ENCODE measurements at regions of chr16 and their contacts with region 1.

Region 1: DNA sequence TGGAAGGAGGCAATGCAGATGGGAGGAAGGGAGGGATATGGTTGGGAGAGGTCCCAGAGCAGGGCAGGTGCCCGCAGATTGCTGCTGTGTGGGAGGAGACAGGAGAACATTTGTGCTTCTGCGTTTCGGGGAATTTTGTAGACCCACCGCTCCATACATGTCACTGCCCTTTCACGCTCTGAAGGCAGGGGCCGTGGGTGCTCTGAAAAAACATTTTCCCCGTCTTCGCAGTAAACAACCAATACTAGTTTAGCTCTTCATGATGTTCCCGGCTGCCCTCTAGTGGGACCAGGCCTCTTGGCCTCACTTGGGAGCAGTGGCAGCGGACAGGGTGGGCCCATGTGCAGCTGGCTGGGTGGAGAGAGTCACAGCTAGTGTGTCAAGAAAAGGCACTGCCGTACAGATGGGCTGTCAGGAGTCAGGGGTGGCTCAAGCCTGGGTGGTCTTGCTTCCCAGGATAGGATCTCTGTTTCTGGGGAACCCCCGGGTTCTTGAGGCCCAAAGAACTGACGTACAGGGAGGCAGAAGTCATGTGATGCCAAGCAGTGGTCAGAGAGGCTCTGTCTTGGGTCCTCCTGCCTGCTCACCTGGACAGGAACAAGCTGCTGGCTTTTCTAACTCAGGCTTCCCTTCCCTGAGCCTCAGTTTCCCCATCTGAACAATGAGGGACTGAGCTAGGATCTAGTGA is 46.5 kb upstream of the CPNE2 start:
- DNase-seq: peak; percentile 40 to 66
- ATAC-seq: peak in 2 of 3 donors; percentile 6 to 27
- H3K4me3 ChIP-seq: no peak overlapping the region
- H3K4me3 Mint-ChIP-seq: peak overlapping the region; percentile 53
- H3K27ac ChIP-seq: peak overlapping the region; percentile 37
- H3K27ac Mint-ChIP-seq: peak overlapping the region; percentile 81 to 87
- H3K4me1 ChIP-seq: peaks cover 57% of the 10 kb centered on the region
- H3K4me1 Mint-ChIP-seq: peaks cover 35 to 37% of the 10 kb centered on the region in 2 donors
- H3K27me3 ChIP-seq: no peaks in the 10 kb centered on the region
- H3K27me3 Mint-ChIP-seq: no peaks in the 10 kb centered on the region
- CTCF ChIP-seq: peak; percentile 44

Region 2: GRCh38 chr16:56860226-56861020 is 185.4 kb before region 1 on chr16:
- intact Hi-C with region 1: loop called (anchors 5 kb)
- DNase-seq: peak in 1 of 2 donors; percentile 72
- ATAC-seq: peak; percentile 72 to 75 (median 74)
- H3K4me3 ChIP-seq: no peak overlapping the region
- H3K4me3 Mint-ChIP-seq: peak overlapping the region; percentile 80
- H3K27ac ChIP-seq: peak overlapping the region; percentile 64
- H3K27ac Mint-ChIP-seq: peak overlapping the region; percentile 80 to 90
- H3K4me1 ChIP-seq: peaks cover 69% of the 10 kb centered on the region
- H3K4me1 Mint-ChIP-seq: peaks cover 51 to 53% of the 10 kb centered on the region in 2 donors
- H3K27me3 ChIP-seq: no peaks in the 10 kb centered on the region
- H3K27me3 Mint-ChIP-seq: peaks cover 0 to 2% of the 10 kb centered on the region in 2 donors
- CTCF ChIP-seq: no peak

Region 3: DNA sequence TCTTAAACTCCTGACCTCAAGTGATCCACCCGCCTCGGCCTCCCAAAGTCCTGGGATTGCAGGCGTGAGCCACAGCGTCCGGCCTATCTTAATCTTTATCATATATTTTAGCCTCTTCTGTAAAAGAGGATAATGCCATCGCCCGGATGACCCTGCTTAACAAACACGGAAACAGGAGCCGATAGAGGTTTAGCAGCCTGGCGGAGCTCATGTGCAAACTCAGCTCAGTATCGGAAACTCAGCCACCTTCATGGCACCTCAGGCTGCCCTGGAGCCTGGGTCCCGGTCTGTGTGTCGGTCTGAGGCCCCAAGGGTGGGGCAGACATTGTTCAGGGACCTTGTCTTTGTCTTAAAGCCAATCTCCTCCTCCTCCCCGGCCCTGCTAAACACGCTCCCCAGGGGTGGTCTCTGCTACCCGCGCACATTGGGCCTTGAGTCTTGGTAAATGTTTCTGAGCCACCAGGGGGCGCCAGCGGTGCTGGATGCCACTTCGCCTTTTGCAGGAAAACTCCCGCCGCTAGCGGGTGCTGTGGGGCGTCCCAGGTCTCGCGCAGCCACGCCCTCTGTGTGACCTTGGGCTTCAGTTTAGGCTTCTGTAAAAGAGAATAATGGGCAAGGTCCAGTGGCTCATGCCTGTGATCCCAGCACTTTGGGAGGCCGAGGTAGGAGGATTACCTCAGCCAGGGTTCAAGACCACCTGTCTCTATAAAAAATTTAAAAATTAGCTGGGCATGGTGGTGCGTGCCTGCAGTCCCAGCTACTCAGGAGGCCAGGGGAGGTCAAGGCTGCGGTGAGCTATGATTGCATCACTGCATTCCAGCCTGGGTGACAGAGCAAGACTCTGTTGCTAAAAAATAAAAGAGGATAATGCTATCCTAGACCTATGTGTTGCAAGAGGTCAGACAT is 81.3 kb before region 1 on chr16:
- intact Hi-C with region 1: loop called (anchors 1 kb)
- DNase-seq: peak; percentile 94 to 97
- ATAC-seq: peak; percentile 98 to 99 (median 98)
- H3K4me3 ChIP-seq: no peak overlapping the region
- H3K4me3 Mint-ChIP-seq: no peak overlapping the region
- H3K27ac ChIP-seq: no peak overlapping the region
- H3K27ac Mint-ChIP-seq: peak overlapping the region; percentile 50 to 66
- H3K4me1 ChIP-seq: peaks cover 18% of the 10 kb centered on the region
- H3K4me1 Mint-ChIP-seq: peaks cover 12 to 18% of the 10 kb centered on the region in 2 donors
- H3K27me3 ChIP-seq: no peaks in the 10 kb centered on the region
- H3K27me3 Mint-ChIP-seq: no peaks in the 10 kb centered on the region
- CTCF ChIP-seq: peak; percentile 100

Region 4: DNA sequence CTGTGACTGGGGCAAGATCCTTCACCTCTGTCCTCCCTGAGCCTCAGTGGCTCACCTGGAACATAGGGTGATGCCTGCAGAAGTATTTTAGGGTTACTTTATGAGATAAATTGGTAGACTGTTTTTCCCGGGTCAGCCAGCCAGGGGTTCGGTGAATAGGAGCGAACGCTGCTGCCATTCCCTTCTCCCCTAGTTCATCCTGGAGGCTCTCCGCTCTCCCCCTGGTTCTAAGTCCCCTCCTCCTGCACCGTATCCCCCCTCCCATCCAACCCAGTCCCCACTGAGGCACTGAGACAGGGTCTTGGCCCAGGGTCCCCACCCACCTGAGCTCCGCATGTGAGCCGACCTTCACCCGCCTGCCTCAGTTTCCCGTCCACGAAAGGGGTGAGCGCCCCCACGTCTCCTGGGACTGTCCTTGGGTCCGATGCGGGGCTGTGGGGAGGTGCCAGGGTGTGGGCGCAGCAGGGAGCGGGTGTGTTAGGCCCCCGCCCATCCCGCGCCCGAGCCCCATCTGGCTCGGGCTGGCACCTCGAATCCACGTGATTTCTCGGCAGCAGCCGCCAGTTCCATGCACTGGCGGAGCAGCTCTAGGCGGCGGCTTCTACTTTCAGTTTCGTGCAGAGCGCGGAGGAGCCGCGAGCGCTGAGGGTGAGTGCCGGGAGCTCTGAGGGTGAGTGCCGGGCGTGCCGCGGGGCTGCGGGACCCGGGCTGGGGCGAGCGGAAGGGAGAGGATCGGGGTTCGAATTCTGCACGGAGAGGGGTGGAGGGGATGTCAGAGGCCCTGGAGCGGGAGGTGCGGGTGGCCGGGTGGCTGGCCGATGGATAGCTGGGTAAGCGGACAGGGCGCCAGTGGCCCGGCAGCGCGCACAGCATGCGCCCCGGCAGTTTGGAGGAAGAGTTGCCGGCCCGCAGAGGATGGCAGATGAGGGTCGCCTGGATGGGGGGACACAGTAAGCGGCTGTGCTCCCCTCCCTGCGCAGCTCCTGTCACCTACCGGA is 56.6 kb before region 1 on chr16 and contains the start of gene NLRC5:
- intact Hi-C with region 1: loop called (anchors 1 kb)
- DNase-seq: peak; percentile 83 to 94
- ATAC-seq: peak; percentile 94 to 96 (median 96)
- H3K4me3 ChIP-seq: peak within 1 kb of the TSS; percentile 89
- H3K4me3 Mint-ChIP-seq: peak within 1 kb of the TSS; percentile 89
- H3K27ac ChIP-seq: peak within 1 kb of the TSS; percentile 79
- H3K27ac Mint-ChIP-seq: peak within 1 kb of the TSS; percentile 91 to 99
- H3K4me1 ChIP-seq: peaks cover 70% of the 10 kb centered on the region
- H3K4me1 Mint-ChIP-seq: peaks cover 64 to 68% of the 10 kb centered on the region in 2 donors
- H3K27me3 ChIP-seq: no peaks in the 10 kb centered on the region
- H3K27me3 Mint-ChIP-seq: no peaks in the 10 kb centered on the region
- CTCF ChIP-seq: no peak
- total RNA-seq, gene NLRC5: 320 to 563 (median 535) TPM

Region 5: GRCh38 chr16:57000271-57001025 is 45.4 kb before region 1 on chr16:
- intact Hi-C with region 1: loop called (anchors 5 kb)
- DNase-seq: peak; percentile 40 to 44
- ATAC-seq: peak; percentile 49 to 85 (median 75)
- H3K4me3 ChIP-seq: no peak overlapping the region
- H3K4me3 Mint-ChIP-seq: peak overlapping the region; percentile 52
- H3K27ac ChIP-seq: peak overlapping the region; percentile 72
- H3K27ac Mint-ChIP-seq: peak overlapping the region; percentile 92 to 95
- H3K4me1 ChIP-seq: peaks cover 84% of the 10 kb centered on the region
- H3K4me1 Mint-ChIP-seq: peaks cover 68 to 77% of the 10 kb centered on the region in 2 donors
- H3K27me3 ChIP-seq: no peaks in the 10 kb centered on the region
- H3K27me3 Mint-ChIP-seq: no peaks in the 10 kb centered on the region
- CTCF ChIP-seq: no peak

Region 6: DNA sequence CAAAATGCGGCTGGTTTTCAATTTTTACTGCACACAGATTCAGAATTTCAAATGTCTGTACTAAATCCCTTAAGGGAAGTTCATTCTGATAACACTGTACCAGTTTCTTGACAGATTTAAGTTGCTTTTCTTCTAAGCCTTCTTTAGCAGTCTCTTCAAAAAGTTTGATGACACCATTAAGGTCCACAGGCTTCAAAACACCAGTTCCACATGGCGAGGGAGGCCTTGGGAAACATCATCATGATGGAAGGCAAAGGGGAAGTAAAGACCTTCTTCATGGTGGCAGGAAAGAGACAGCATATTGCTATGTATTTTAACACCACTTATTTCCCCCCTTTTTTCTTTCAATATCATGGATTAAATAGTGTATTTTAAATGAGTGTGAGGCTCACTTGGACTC is 31.9 kb before region 1 on chr16:
- intact Hi-C with region 1: loop called (anchors 1 kb)
- DNase-seq: peak in 1 of 2 donors; percentile 44
- ATAC-seq: no peak
- H3K4me3 ChIP-seq: no peak overlapping the region
- H3K4me3 Mint-ChIP-seq: peak overlapping the region; percentile 85
- H3K27ac ChIP-seq: peak overlapping the region; percentile 96
- H3K27ac Mint-ChIP-seq: peak overlapping the region; percentile 92 to 100
- H3K4me1 ChIP-seq: peaks cover 57% of the 10 kb centered on the region
- H3K4me1 Mint-ChIP-seq: peaks cover 58 to 61% of the 10 kb centered on the region in 2 donors
- H3K27me3 ChIP-seq: no peaks in the 10 kb centered on the region
- H3K27me3 Mint-ChIP-seq: no peaks in the 10 kb centered on the region
- CTCF ChIP-seq: no peak

Region 7: GRCh38 chr16:57071831-57072582 is 26.2 kb after region 1 on chr16:
- intact Hi-C with region 1: loop called (anchors 2 kb)
- DNase-seq: peak in 1 of 2 donors; percentile 46
- ATAC-seq: peak; percentile 30 to 54 (median 52)
- H3K4me3 ChIP-seq: no peak overlapping the region
- H3K4me3 Mint-ChIP-seq: peak overlapping the region; percentile 66
- H3K27ac ChIP-seq: peak overlapping the region; percentile 70
- H3K27ac Mint-ChIP-seq: peak overlapping the region; percentile 83 to 88
- H3K4me1 ChIP-seq: peaks cover 15% of the 10 kb centered on the region
- H3K4me1 Mint-ChIP-seq: peaks cover 36 to 39% of the 10 kb centered on the region in 2 donors
- H3K27me3 ChIP-seq: no peaks in the 10 kb centered on the region
- H3K27me3 Mint-ChIP-seq: no peaks in the 10 kb centered on the region
- CTCF ChIP-seq: no peak

Region 8: DNA sequence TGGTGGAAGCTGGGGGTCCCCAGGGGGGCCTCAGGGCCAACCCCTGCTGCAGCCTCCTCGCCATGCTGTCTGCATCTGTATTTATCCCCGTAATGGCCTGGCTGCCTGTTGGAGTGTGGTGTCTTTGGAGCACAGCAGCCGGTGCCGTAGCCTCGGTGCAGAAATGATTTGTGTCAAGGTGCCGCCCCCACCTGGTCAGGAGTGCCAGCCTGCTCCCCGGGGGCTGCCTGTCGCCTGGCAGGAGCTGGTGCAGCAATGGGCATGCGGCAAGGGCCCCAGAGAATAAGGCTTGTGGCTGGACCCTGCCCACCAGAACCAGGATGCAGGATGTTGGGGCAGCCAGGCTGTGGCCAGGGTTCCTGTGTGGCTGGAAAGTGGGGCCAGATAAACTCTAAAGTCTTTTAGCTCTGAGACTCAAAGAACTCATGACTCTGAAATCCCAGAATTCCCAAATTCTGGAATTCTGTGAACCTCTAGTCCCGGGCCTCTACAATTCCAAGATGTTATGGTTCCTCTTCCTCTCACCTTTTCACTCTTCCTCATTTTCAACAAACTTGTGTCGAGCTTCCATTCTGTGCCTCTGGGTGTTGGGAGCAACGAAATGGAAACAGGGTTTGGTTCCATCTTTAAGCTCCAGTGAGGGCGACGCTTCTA is 52.5 kb after region 1 on chr16:
- intact Hi-C with region 1: no loop called
- DNase-seq: no peak
- ATAC-seq: no peak
- H3K4me3 ChIP-seq: no peak overlapping the region
- H3K4me3 Mint-ChIP-seq: no peak overlapping the region
- H3K27ac ChIP-seq: no peak overlapping the region
- H3K27ac Mint-ChIP-seq: no peak overlapping the region
- H3K4me1 ChIP-seq: peaks cover 8% of the 10 kb centered on the region
- H3K4me1 Mint-ChIP-seq: peaks cover 0 to 10% of the 10 kb centered on the region in 2 donors
- H3K27me3 ChIP-seq: peaks cover 6% of the 10 kb centered on the region
- H3K27me3 Mint-ChIP-seq: peaks cover 0 to 17% of the 10 kb centered on the region in 2 donors
- CTCF ChIP-seq: no peak